ENCODE measurements at regions of chr17 and their contacts with region 1.

Region 1: DNA sequence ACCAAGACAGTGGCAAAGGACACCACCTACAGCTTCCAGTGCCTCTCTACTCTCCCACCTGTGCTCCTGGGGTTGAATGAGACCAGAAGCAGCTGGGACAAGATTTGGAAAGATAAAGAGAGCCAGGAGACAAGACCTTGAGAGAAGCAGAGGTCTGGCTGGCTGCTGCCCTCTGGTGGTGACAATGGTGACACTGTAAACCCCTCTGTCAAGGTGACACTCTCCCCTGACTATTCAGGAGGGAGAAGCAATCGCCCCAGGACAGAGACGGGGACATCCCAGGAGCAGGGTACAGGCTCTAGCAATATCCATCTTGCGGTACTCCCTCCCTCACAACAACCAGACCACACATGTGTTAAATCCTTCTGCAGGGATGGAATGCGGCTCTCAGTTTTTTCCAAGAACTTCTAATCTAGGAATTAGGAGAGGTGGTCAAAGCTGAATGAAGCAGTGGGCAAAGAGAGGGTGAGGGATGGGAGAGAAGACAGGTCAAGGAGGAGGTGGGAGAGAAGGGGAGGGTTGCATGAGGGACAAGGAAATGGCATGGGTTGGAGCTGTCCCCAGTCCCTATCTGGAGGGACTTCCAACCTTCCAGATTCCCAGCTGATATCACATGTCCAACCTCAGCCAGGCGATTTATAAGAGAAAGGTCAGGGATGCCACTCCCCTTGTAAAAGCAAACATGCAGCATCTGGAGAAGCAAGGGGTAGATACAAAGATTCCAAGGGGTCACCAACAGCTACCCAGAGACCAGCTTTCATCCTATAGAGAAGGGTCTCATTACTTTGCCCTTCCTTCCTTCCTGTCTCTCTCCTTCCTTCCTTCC is 2.9 kb downstream of the PHOSPHO1 start:
- DNase-seq: peak; percentile 93 to 94
- H3K4me3 ChIP-seq: no peak overlapping the region
- H3K4me3 Mint-ChIP-seq: no peak overlapping the region
- H3K27ac Mint-ChIP-seq: no peak overlapping the region
- H3K4me1 ChIP-seq: peaks cover 32% of the 10 kb centered on the region
- H3K4me1 Mint-ChIP-seq: peaks cover 23% of the 10 kb centered on the region
- H3K27me3 ChIP-seq: peaks cover 7% of the 10 kb centered on the region
- H3K27me3 Mint-ChIP-seq: peaks cover 21% of the 10 kb centered on the region
- CTCF ChIP-seq: peak; percentile 99

Region 2: DNA sequence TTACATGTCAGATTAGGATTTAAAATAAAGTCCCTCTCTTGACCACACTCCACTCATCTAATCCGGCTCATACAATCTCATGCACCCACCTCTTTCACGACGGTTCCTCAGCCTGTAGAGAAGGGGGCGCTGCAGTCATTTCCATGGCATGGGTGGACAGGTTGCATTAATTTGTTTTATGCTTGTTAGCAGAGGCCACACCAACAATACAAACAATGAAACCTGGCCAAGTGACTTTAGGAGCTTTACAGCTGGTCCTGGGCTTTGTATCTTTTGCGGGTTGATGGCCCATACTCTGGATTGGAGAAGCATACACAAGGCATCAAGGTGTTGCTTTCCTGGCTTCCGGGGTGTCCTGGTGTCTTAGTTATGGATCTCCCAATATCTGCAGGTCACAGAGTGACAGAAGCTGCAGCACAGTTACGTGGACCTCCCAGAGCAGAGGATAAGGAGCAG is 273.3 kb before region 1 on chr17:
- CTCF ChIA-PET with region 1: no interaction called
- POLR2A ChIA-PET with region 1: no interaction called
- intact Hi-C with region 1: loop called (anchors 10 kb)
- DNase-seq: peak; percentile 89 to 91
- H3K4me3 ChIP-seq: no peak overlapping the region
- H3K4me3 Mint-ChIP-seq: no peak overlapping the region
- H3K27ac Mint-ChIP-seq: peak overlapping the region; percentile 47
- H3K4me1 ChIP-seq: peaks cover 13% of the 10 kb centered on the region
- H3K4me1 Mint-ChIP-seq: peaks cover 10% of the 10 kb centered on the region
- H3K27me3 ChIP-seq: no peaks in the 10 kb centered on the region
- H3K27me3 Mint-ChIP-seq: no peaks in the 10 kb centered on the region
- CTCF ChIP-seq: peak; percentile 94 to 97

Region 3: GRCh38 chr17:49191917-49192741 is 35.5 kb before region 1 on chr17:
- CTCF ChIA-PET with region 1: interaction called, 12 read pairs
- POLR2A ChIA-PET with region 1: no interaction called
- intact Hi-C with region 1: loop called (anchors 1 kb)
- DNase-seq: peak; percentile 92 to 99
- H3K4me3 ChIP-seq: peak overlapping the region; percentile 72
- H3K4me3 Mint-ChIP-seq: peak overlapping the region; percentile 73
- H3K27ac Mint-ChIP-seq: peak overlapping the region; percentile 95
- H3K4me1 ChIP-seq: no peaks in the 10 kb centered on the region; the same call in 1 of the 2 replicates
- H3K4me1 Mint-ChIP-seq: peaks cover 14% of the 10 kb centered on the region
- H3K27me3 ChIP-seq: no peaks in the 10 kb centered on the region
- H3K27me3 Mint-ChIP-seq: no peaks in the 10 kb centered on the region
- CTCF ChIP-seq: peak; percentile 44 to 69

Region 4: GRCh38 chr17:49290690-49291359 is 63.2 kb after region 1 on chr17:
- CTCF ChIA-PET with region 1: interaction called, 7 read pairs
- POLR2A ChIA-PET with region 1: interaction called, 4 read pairs
- intact Hi-C with region 1: loop called (anchors 1 kb)
- DNase-seq: peak in 1 of 2 experiments; percentile 61
- H3K4me3 ChIP-seq: no peak overlapping the region
- H3K4me3 Mint-ChIP-seq: no peak overlapping the region
- H3K27ac Mint-ChIP-seq: no peak overlapping the region
- H3K4me1 ChIP-seq: no peaks in the 10 kb centered on the region
- H3K4me1 Mint-ChIP-seq: no peaks in the 10 kb centered on the region
- H3K27me3 ChIP-seq: no peaks in the 10 kb centered on the region
- H3K27me3 Mint-ChIP-seq: no peaks in the 10 kb centered on the region
- CTCF ChIP-seq: peak; percentile 91 to 92